ENCODE measurements at regions of chr20 and their contacts with region 1.

Region 1: GRCh38 chr20:62121776-62122631 is at the start of gene LSM14B:
- DNase-seq: peak; percentile 90 to 99 (median 96)
- ATAC-seq: peak; percentile 72 to 75
- H3K4me3 Mint-ChIP-seq: peak within 1 kb of the TSS; percentile 82 to 94 (median 88)
- H3K27ac Mint-ChIP-seq: peak within 1 kb of the TSS; percentile 70 to 97 (median 94)
- H3K4me1 Mint-ChIP-seq: peaks cover 27 to 65% (median 59%) of the 10 kb centered on the region in 4 donors
- H3K27me3 Mint-ChIP-seq: no peaks in the 10 kb centered on the region
- polyA plus RNA-seq, gene LSM14B: 1.5 to 2.4 (median 2.4) TPM

Region 2: DNA sequence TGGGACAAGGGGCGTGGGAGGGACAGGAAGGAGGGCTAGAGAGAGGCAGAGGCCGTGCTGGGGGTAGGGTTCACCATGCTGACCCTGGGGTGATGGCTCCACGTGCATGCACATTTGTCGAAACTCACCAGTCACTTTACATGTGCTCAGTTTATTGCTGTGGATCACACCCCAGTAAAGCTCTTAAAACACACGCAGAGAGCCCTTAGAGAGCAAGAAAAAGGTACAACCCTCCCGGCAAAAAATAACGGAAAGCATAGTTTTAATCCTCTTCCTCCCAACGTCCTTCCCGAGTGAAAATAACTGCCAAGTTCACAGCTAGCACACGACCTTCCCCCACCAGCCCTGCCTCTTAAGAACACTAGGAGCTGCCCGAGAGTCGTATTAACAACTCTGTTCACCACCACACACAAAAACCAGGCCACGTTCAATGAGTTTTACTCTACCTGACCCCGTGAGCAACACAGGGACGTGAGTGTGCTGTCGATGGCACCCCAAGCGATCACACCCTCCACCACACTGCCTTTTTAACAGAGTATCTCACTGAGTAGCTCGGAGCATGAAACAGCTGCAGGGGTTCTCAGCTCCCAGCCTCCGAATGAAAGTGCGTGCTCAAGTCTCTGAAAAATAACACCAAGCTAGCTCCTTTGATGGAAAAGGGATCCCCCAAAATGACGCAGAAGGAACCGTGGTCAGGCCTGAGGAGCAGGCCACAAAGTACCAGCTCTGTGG is 96.0 kb before region 1 on chr20:
- POLR2A ChIA-PET with region 1: interaction called, 13 read pairs
- DNase-seq: peak in 8 of 10 donors; percentile 22 to 53 (median 36)
- ATAC-seq: peak; percentile 84 to 89
- H3K4me3 Mint-ChIP-seq: peak overlapping the region in 4 of 10 donors; percentile 0 to 55 (median 18)
- H3K27ac Mint-ChIP-seq: peak overlapping the region; percentile 9 to 83 (median 40)
- H3K4me1 Mint-ChIP-seq: peaks cover 28 to 70% (median 46%) of the 10 kb centered on the region in 4 donors
- H3K27me3 Mint-ChIP-seq: no peaks in the 10 kb centered on the region

Region 3: DNA sequence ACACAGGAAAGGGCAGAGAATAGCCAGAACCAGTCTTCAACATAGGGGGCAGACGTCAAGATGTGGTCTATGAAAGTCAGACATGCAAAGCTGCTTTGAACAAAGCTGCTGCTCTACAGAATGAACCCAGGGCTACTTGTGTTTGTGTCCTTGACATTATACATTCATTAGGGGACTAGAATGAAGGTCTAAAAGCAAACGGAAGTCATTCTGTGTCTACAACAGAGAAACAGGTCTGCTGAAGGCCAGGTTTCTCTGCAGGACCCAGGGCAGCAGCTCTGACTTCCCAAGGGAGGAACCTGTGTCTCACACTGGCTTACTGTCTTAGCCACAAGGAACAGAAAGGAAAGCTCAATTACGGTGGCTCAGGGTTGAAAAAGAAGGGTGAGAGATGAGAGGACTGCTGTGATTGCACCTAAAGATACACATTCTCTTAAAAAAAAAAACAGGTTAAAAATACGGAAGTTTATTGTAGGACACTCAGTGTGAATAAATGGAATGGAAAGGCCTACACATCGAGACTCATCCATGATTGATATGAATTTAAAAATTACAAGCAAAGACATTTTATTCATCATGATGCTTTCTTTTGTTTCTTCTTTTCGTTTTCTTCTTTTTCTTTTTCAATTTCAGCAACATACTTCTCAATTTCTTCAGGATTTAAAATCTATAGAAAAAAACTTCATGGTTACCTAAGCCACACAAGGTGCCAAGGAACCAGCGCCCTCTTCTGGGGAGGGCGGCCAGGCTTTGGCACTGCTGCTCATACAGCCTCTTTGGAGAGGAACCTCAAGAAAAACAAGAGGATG is 14.5 kb after region 1 on chr20:
- POLR2A ChIA-PET with region 1: interaction called, 58 read pairs
- DNase-seq: peak; percentile 61 to 86 (median 70)
- ATAC-seq: peak; percentile 70 to 79
- H3K4me3 Mint-ChIP-seq: no peak overlapping the region
- H3K27ac Mint-ChIP-seq: peak overlapping the region; percentile 19 to 94 (median 82)
- H3K4me1 Mint-ChIP-seq: peaks cover 25 to 51% (median 41%) of the 10 kb centered on the region in 4 donors
- H3K27me3 Mint-ChIP-seq: no peaks in the 10 kb centered on the region

Region 4: GRCh38 chr20:62143118-62143973 is 21.3 kb after region 1 on chr20 and contains the starts of genes PSMA7 and SS18L1:
- POLR2A ChIA-PET with region 1: interaction called, 58 read pairs
- DNase-seq: peak; percentile 73 to 90 (median 84)
- ATAC-seq: peak; percentile 82 to 84
- H3K4me3 Mint-ChIP-seq: peak within 1 kb of the TSS; percentile 81 to 93 (median 89)
- H3K27ac Mint-ChIP-seq: peak within 1 kb of the TSS; percentile 85 to 97 (median 94)
- H3K4me1 Mint-ChIP-seq: peaks cover 24 to 59% (median 50%) of the 10 kb centered on the region in 4 donors
- H3K27me3 Mint-ChIP-seq: no peaks in the 10 kb centered on the region
- polyA plus RNA-seq, gene PSMA7: 362 to 473 (median 419) TPM
- polyA plus RNA-seq, gene SS18L1: 0.39 to 0.58 (median 0.50) TPM

Region 5: GRCh38 chr20:62156592-62157386 is 34.8 kb after region 1 on chr20:
- POLR2A ChIA-PET with region 1: no interaction called
- DNase-seq: peak; percentile 60 to 87 (median 72)
- ATAC-seq: peak; percentile 98 to 99
- H3K4me3 Mint-ChIP-seq: no peak overlapping the region
- H3K27ac Mint-ChIP-seq: peak overlapping the region in 1 of 10 donors; percentile 59
- H3K4me1 Mint-ChIP-seq: peaks cover 12 to 34% (median 27%) of the 10 kb centered on the region in 4 donors
- H3K27me3 Mint-ChIP-seq: no peaks in the 10 kb centered on the region

Measured in naive thymus-derived CD8-positive, alpha-beta T cell (primary cell).